ENCODE measurements at regions of chr10 and their contacts with region 1.

Region 1: GRCh38 chr10:17200912-17201793 is at the start of gene TRDMT1:
- DNase-seq: peak; percentile 91
- H3K4me3 ChIP-seq: peak within 1 kb of the TSS; percentile 69 to 95 (median 91)
- H3K27ac ChIP-seq: peak within 1 kb of the TSS; percentile 100
- H3K4me1 ChIP-seq: peaks cover 28% of the 10 kb centered on the region
- H3K27me3 ChIP-seq: no peaks in the 10 kb centered on the region
- CTCF ChIP-seq: no peak
- POLR2A ChIP-seq: peak; percentile 86
- total RNA-seq, gene TRDMT1: 12.3 and 15.2 TPM in 2 replicates

Region 2: DNA sequence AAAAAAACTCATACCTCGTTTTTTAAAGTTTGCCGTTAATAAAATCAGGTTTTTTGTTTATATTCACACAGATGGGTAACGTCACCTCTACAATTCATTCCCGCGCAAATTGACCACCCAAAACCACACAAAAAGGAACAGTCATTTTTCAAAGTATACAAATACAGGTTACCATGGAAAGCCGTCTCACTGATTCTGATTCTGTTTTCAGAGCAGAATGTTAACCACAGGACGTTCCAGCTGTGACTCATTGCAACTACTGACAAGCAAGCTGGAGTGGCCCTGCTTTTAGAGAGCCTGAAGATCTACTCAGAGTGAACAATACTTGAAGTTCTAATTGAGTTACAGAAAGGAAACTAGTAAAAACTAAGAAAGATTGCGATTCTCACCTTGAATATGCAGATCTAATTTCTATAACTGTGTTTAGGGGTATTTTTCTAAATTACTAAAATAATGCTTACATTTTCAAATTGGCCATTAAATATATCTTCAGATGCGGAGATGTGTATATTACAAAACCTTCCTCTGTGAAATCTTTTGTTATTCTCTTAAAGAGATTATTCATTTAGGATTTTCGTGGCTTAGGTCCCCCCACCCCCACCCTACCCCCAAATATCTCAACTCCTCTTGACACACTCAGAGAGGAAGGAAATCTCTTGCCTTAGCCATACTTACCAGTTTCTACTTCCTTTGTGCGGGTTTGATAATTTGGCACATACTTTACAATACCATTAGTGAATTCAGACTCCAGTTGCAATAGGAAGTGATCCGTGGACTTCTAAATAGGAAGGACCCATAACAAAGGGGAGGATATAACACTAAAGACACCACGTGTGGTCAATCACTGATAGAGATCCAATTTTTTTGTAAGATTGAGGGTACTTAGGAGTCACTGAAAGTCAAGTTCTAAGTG is 177.5 kb before region 1 on chr10:
- CTCF ChIA-PET with region 1: no interaction called
- POLR2A ChIA-PET with region 1: no interaction called
- dilution Hi-C with region 1: no loop called
- intact Hi-C with region 1: loop called (anchors 1 kb)
- DNase-seq: peak; percentile 96
- H3K4me3 ChIP-seq: peak overlapping the region in 1 of 3 experiments; percentile 35
- H3K27ac ChIP-seq: peak overlapping the region; percentile 72
- H3K4me1 ChIP-seq: peaks cover 51% of the 10 kb centered on the region
- H3K27me3 ChIP-seq: no peaks in the 10 kb centered on the region
- CTCF ChIP-seq: no peak
- POLR2A ChIP-seq: peak; percentile 22

Region 3: GRCh38 chr10:17101257-17101909 is 99.8 kb before region 1 on chr10:
- CTCF ChIA-PET with region 1: no interaction called
- POLR2A ChIA-PET with region 1: no interaction called
- dilution Hi-C with region 1: no loop called
- intact Hi-C with region 1: loop called (anchors 1 kb)
- DNase-seq: peak; percentile 70
- H3K4me3 ChIP-seq: no peak overlapping the region
- H3K27ac ChIP-seq: peak overlapping the region; percentile 65
- H3K4me1 ChIP-seq: peaks cover 16% of the 10 kb centered on the region
- H3K27me3 ChIP-seq: no peaks in the 10 kb centered on the region
- CTCF ChIP-seq: no peak
- POLR2A ChIP-seq: no peak

Region 4: DNA sequence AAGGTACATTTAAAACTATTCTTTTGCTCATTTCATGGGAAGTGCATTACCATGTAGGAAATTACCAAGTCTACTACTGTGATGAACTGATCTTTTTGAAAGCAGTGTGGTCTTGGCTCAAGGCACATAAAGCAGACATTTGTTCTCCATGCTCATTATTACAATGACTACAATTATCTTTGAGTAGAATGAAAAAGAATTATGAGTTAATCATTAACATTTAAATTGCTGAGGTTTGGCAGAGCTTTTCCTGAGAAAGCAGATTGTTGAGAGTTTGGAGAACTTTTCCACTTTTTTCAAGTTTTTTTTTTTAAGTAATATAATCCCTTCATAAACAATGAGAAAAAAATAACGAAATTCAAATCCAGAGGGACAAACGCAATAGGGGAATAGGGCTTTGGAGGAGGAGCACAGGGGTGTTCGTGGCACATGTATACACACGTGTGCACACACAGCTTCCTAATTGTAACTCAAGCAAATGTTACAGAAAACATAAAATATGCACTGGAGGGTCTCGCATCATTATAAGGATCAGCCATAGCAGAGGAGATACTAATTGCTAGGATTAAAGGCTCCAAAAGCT is 62.6 kb before region 1 on chr10:
- CTCF ChIA-PET with region 1: no interaction called
- POLR2A ChIA-PET with region 1: no interaction called
- dilution Hi-C with region 1: no loop called
- intact Hi-C with region 1: no loop called
- DNase-seq: no peak
- H3K4me3 ChIP-seq: no peak overlapping the region
- H3K27ac ChIP-seq: no peak overlapping the region
- H3K4me1 ChIP-seq: no peaks in the 10 kb centered on the region
- H3K27me3 ChIP-seq: no peaks in the 10 kb centered on the region
- CTCF ChIP-seq: no peak
- POLR2A ChIP-seq: no peak

Region 5: DNA sequence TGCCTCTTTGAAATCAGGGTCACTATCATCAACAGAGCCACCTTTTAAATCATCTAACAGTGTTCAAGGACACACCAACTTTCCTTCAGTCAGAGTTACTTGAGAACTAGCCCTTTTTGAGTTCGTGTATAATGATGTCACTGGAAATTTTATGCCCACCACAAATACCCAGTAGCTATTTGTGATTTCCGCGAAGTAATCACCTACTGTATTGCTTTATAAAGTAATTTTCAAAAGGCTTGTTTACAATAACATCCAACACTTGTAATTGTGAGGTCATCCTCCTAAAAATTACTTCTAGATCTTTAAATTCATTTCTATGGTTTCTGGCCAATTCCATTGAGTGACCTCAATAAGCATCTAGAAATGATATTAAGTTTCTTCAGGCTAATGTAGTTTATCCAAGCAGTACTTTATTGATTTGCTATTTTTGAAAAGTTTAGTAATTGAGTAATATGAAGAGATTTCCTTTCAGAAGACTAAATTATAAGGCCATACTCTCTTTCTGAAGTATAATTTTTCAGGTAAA is 12.4 kb before region 1 on chr10:
- CTCF ChIA-PET with region 1: interaction called, 10 read pairs
- POLR2A ChIA-PET with region 1: no interaction called
- dilution Hi-C with region 1: no loop called
- intact Hi-C with region 1: no loop called
- DNase-seq: no peak
- H3K4me3 ChIP-seq: no peak overlapping the region
- H3K27ac ChIP-seq: no peak overlapping the region
- H3K4me1 ChIP-seq: no peaks in the 10 kb centered on the region
- H3K27me3 ChIP-seq: no peaks in the 10 kb centered on the region
- CTCF ChIP-seq: no peak
- POLR2A ChIP-seq: no peak

Measured in endothelial cell of umbilical vein (primary cell).